GM18951 (cell line): ENCODE measurements at regions of chr4 and their contacts with region 1.

Region 1: DNA sequence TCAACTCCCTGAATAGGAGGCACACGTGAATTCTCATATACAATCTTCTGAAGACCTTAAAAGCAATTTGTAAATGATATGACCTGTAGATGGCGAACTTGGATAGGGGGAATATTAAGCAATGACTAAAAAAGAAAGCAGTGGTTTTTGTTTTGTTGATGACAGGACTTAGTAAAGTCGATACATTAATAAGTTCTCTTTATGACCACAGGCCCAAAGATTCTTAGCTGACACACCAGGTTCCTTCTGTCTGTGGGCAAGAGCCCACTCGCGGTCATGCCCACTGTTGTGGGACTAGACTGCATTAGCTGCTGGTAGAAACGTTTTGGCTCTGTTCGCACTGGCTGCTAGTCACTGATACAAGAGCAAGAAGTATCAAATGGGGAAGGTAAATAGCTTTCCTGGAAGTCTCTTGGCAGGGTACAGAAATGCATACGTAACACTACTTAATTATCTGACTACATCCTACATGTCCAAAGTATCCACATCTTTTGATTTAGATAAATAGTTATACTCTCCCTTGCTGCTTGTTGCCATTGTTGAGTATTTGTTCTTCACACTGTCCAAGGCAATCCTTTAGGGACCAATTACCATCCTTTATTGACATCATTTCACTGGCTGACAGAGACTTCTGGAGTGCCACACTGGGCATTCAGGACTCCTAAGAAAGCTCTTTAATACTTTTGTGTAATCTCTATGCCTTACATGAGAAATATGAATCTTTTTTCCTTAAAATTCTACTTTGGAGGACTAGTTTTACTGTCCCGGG is 31.0 kb downstream of the ALPK1 start:
- POLR2A ChIP-seq: no peak

Region 2: GRCh38 chr4:112502871-112503270 is 174.7 kb after region 1 on chr4:
- in situ Hi-C with region 1: no loop called
- POLR2A ChIP-seq: no peak

Region 3: DNA sequence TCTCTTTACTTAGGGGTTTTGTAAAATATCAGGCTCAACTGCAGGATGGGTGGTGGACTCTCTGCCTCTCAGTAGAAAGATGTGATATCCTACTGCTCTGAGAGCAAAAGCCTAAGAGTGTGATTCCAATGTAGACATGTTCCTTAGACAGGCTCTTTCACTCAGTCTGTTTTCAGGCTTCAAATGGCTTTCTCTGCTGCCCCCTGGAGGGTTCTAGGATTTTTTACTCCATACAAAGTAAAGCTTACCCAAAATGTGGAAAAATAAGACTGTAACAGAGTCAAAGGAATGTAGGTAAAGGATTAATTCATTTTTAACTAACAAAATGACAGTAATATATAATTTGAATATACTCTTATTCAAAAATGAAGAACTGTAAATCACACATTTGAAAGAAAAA is 276.4 kb after region 1 on chr4:
- in situ Hi-C with region 1: loop called (anchors 10 kb)
- POLR2A ChIP-seq: no peak

Region 4: DNA sequence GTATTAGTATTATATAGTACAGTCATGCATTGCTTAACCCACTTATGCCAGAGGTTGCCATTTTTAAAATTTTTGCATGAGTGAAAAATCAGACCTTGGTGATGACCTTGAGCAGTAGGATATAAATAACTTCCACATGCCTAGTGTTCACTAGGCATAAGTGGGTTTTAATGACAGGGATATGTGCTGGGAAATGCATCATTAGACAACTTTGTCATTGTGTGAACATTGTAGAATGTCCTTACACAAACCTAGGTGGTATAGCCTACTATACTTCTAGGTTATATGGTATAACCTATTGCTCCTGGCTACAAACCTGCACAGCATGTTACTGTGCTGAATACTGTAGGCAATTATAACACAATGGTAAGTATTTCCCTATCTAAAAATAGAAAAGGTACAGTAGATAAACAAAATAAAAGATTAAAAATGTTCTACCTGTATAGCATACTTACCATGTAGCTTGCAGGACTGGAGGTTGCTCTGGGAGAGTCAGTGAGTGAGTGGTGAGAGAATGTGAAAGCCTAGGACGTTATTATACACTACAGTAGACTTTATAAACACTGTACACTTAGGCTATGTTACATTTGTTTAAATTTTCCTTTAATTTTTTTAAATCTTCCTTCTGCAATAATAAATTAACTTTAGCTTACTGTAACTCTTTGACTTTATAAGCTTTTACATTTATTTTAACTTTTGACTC is 1048.0 kb after region 1 on chr4:
- in situ Hi-C with region 1: no loop called
- POLR2A ChIP-seq: no peak